ENCODE measurements at regions of chr13 and their contacts with region 1.

Region 1: GRCh38 chr13:71477735-71478134 is 389.3 kb downstream of the DACH1 start:
- DNase-seq: peak; percentile 8
- H3K4me3 Mint-ChIP-seq: no peak overlapping the region
- H3K27ac Mint-ChIP-seq: no peak overlapping the region
- H3K4me1 Mint-ChIP-seq: no peaks in the 10 kb centered on the region
- H3K27me3 Mint-ChIP-seq: peaks cover 55% of the 10 kb centered on the region
- CTCF ChIP-seq: peak; percentile 43

Region 2: DNA sequence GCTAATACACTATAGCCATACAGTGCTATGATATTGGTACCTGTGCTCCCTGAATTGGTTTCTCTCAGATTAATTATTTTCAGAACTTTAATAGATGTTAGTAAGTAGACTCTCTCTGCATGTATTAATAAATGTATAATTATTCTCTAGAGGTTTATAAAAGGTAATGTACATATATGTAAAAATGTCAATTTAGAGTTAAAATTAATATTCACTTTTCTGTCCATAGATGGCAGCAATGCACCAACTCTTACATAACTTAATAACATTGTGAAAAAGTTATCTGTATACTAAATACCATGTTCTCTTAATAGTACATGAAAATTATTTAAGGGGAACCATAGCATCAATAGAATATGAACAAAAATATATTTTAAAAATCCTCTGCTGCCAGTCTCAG is 854.5 kb before region 1 on chr13:
- CTCF ChIA-PET with region 1: no interaction called
- POLR2A ChIA-PET with region 1: no interaction called
- intact Hi-C with region 1: loop called (anchors 10 kb)
- DNase-seq: peak; percentile 11
- H3K4me3 Mint-ChIP-seq: no peak overlapping the region
- H3K27ac Mint-ChIP-seq: no peak overlapping the region
- H3K4me1 Mint-ChIP-seq: no peaks in the 10 kb centered on the region
- H3K27me3 Mint-ChIP-seq: peaks cover 37% of the 10 kb centered on the region
- CTCF ChIP-seq: peak; percentile 39

Region 3: DNA sequence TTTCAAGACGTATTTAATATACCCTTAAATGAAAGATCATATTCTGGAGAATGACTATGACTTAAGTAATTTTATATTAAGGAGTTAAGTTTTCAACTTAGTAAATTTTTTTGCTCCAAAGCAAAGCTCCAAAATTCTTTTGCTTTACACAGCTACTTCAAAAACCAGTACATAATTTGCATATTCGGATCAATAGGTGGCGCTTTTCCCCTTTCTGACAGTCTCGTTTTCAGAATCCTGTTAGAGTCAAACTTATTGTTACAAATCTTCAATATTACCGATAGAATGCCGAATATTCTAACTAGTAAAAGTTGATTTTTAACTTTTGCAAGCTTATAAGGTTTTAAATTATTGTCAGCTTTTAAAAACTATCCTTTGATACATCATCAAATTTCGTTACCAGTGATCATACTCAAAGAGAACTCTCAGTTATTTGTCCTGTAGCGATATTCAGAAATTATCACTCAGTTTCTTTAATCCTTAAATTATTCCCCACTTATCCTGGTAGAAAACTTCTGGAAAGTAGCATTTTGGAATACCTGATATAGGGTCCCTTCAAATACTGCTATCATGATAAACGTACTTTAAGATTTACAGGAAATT is 516.8 kb before region 1 on chr13:
- CTCF ChIA-PET with region 1: interaction called, 3 read pairs
- POLR2A ChIA-PET with region 1: no interaction called
- intact Hi-C with region 1: loop called (anchors 5 kb)
- DNase-seq: peak; percentile 47
- H3K4me3 Mint-ChIP-seq: no peak overlapping the region
- H3K27ac Mint-ChIP-seq: no peak overlapping the region
- H3K4me1 Mint-ChIP-seq: no peaks in the 10 kb centered on the region
- H3K27me3 Mint-ChIP-seq: peaks cover 69% of the 10 kb centered on the region
- CTCF ChIP-seq: peak; percentile 56

Region 4: DNA sequence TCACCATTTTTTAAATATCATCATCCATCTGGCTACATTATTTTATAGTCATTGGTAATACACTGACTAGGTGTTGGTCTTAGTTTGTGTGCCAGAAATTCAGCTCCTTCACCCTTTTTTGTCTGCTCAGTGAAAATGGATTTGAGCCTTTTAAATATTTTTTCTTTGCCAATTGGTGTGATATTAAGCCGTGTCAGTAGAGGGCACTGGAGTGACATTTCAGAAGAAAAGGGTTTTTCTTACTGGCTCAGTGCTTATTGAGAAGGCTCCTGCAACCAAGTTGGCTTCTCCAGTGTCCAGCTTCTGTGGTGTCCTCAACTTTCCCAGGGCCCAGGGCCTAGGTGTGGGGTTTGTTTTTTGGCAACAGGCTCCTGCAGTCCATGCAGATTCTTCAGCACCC is 157.3 kb before region 1 on chr13:
- CTCF ChIA-PET with region 1: interaction called, 3 read pairs
- POLR2A ChIA-PET with region 1: no interaction called
- intact Hi-C with region 1: loop called (anchors 10 kb)
- DNase-seq: peak; percentile 28
- H3K4me3 Mint-ChIP-seq: no peak overlapping the region
- H3K27ac Mint-ChIP-seq: no peak overlapping the region
- H3K4me1 Mint-ChIP-seq: no peaks in the 10 kb centered on the region
- H3K27me3 Mint-ChIP-seq: peaks cover 83% of the 10 kb centered on the region
- CTCF ChIP-seq: peak; percentile 43

Region 5: DNA sequence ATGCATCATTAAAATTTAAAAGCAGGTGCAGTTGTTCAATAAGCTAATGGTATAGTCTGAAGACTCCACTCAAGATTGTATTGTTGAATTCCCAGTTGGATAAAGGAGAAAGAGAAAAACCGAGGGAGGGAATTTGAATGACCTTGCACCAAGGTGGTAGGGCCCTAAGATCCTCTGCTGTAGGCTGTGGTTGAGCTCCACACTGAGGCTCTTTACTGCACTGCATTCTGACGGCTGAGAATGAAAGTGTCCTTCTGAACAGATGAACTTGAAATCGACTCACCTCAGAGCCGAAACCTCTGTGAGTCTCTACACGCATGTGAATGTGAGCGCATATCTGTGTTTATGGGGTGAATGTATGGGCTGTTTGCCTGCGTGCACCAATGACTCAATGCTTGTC is 778.2 kb after region 1 on chr13:
- CTCF ChIA-PET with region 1: no interaction called
- POLR2A ChIA-PET with region 1: no interaction called
- intact Hi-C with region 1: loop called (anchors 5 kb)
- DNase-seq: peak; percentile 51
- H3K4me3 Mint-ChIP-seq: no peak overlapping the region
- H3K27ac Mint-ChIP-seq: no peak overlapping the region
- H3K4me1 Mint-ChIP-seq: no peaks in the 10 kb centered on the region
- H3K27me3 Mint-ChIP-seq: peaks cover 64% of the 10 kb centered on the region
- CTCF ChIP-seq: peak; percentile 85